Activated CD8-positive, alpha-beta T cell treated with anti-CD3 and anti-CD28 coated beads, Interleukin-2, amount 10 ng/mL, durations not matched to agents 7 days and 5 days (primary cell): ENCODE measurements at regions of chr5 and their contacts with region 1.

Region 1: GRCh38 chr5:160439205-160439600 is 17.5 kb downstream of the PTTG1 start:
- DNase-seq: peak; percentile 90
- ATAC-seq: peak; percentile 88
- H3K4me3 Mint-ChIP-seq: peak overlapping the region; percentile 74
- H3K27ac Mint-ChIP-seq: peak overlapping the region; percentile 85
- H3K4me1 Mint-ChIP-seq: peaks cover 41% of the 10 kb centered on the region
- H3K27me3 Mint-ChIP-seq: peaks cover 15% of the 10 kb centered on the region

Region 2: DNA sequence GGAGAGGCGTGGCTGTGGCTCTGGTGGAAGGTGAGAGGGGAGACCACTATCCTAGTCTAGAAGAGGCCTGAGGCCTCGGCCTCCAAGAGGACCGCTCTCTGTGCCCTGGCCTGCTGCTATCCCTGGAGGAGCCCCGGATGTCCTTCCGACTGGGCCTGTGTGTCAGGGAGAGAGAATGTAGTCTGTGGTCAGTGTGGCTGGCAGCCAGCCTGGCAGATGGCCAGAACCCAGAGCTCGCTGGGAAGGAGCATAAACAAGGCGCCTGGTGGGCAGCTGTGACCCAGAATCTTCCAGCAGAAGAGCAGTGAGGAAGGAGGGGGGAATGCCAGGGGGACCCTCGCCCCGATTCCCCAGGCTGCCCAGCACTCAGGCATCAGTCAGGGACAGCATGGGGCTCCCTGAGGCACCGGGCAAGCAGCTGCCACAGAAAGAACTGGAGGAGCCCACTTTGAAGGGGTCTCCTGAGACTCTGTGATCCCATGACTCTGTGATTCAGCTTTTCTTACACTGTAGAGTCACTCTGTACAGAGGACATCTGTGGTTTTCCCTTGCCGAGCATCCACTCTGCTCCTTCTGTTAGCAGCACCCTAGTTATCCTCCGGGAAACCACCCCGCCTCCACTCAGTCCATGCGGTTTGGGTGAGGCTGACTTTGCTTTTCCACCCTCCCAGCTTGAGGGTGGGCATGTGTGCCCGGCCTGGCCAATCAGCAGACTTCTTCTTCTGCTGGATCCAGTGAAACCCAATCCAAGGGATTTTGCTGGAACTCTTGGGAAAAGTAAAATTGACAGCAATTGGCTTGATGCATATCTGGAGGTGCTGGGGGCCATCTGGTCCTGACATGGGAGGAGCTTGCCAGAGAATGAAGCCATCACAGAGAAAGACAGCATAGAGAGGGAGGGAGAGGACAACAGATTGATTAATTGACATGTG is 273.8 kb before region 1 on chr5:
- CTCF ChIA-PET with region 1: no interaction called
- POLR2A ChIA-PET with region 1: no interaction called
- DNase-seq: no peak
- ATAC-seq: peak; percentile 42
- H3K4me3 Mint-ChIP-seq: no peak overlapping the region
- H3K27ac Mint-ChIP-seq: no peak overlapping the region
- H3K4me1 Mint-ChIP-seq: peaks cover 10% of the 10 kb centered on the region
- H3K27me3 Mint-ChIP-seq: peaks cover 13% of the 10 kb centered on the region

Region 3: DNA sequence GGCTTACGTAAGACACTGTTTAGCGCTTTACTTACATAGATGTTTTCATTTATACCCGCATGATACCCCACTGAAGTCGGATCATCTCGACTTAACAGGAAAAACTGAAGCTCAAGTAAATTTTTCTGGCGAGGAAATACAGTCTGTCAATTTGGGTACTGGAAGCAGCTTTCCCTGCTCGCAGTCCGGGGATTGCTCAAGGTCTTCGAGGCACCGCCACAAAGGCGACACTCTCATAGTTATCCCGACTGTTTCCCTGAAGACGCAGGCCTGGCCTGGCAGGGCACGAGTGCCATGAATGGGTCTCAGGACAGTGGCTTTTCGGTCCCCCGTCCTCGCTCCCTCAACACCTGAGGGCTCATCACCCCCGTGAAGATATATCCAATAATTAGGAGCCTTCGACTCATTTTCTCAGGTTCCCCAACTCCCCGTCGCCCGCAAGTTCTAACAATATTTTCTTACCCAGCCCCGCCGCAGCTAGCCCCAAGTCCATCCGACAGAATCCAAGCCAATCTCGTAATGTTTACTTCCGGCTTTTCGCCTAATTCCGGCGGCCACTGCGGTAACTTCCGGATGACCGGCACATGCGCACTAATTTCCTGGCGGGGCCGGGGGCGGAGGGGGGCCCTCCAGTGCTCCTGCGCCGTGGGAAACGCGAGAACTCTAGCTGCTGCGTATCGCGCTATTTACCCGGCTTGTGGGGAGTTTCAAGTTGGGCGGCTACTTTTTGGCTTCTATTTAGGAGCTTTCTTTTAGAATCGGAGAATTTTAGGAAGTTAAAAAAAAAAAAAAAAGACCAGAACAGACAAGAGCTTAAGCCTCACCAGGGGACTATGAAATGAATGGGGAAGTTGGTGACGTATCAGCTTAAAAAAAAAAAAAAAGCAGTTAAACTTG is 20.4 kb before region 1 on chr5 and contains the start of gene SLU7:
- CTCF ChIA-PET with region 1: interaction called, 202 read pairs
- POLR2A ChIA-PET with region 1: interaction called, 14 read pairs
- DNase-seq: peak; percentile 96
- ATAC-seq: peak; percentile 84
- H3K4me3 Mint-ChIP-seq: peak within 1 kb of the TSS; percentile 100
- H3K27ac Mint-ChIP-seq: peak within 1 kb of the TSS; percentile 99
- H3K4me1 Mint-ChIP-seq: peaks cover 63% of the 10 kb centered on the region
- H3K27me3 Mint-ChIP-seq: no peaks in the 10 kb centered on the region
- total RNA-seq, gene SLU7: 41.0 to 46.9 TPM

Region 4: DNA sequence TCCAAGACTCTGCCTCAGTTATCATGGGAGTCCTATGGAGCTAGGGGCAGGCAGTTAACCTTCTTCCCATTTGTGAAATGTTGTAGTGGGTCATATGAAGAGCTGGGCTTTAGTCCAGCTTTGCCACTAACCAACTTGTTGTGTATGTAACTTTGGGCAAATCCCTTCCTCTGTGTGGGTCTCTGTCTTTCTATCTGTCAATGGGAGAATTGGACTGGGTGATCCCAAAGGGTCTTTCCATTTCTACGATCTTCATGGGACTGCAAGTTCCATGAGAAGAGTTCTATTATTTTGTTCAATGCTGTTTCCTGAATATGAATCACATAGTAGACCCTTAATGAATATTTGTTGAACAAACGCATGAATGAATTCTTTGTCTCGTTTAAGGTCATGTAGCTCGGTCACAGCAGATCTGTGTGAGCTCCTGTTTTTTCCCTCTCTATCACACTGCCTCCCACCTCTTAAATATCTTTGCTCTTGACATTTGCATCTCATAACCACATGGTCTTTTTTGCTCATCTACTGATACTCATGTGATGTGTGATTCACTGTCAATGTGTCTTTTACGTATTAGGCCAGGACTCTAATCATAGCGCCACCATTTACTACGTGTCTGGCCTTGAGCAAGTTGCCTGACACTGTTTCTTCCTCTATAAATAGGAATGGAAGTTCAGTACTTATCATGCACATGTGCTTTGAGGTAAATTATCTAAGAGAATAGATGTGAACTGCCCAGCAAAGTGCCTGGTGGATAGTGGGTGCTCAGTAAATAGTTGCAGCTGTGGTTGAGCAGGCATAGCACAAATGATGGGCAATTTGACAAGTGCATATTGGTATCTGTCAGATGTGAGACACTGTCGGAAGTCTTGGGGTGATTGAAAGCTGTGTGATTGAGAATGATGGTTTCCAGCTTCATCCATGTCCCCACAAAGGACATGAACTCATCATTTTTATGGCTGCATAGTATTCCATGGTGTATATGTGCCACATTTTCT is 19.9 kb after region 1 on chr5:
- CTCF ChIA-PET with region 1: interaction called, 295 read pairs
- POLR2A ChIA-PET with region 1: no interaction called
- DNase-seq: no peak
- ATAC-seq: no peak
- H3K4me3 Mint-ChIP-seq: no peak overlapping the region
- H3K27ac Mint-ChIP-seq: no peak overlapping the region
- H3K4me1 Mint-ChIP-seq: peaks cover 18% of the 10 kb centered on the region
- H3K27me3 Mint-ChIP-seq: peaks cover 3% of the 10 kb centered on the region

Region 5: DNA sequence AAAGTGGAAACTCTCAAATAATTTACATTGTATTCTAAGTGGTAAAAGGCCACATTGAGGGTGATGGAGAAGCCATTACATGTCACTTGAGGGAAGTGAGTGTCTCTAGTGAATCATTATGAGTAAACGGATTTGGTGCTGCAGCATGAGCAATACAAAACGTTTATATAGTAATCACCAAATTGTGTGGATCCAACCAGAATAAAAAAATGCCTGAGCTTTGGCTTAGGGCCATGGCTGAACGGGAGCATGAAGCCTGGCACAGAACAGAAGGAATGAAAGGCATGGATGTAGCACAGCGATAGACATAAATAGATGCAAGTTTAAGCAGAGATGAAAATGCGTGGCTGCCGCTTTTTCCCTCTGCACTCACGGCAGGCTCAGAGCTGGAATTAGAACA is 40.7 kb after region 1 on chr5:
- CTCF ChIA-PET with region 1: interaction called, 54 read pairs
- POLR2A ChIA-PET with region 1: no interaction called
- DNase-seq: no peak
- ATAC-seq: no peak
- H3K4me3 Mint-ChIP-seq: no peak overlapping the region
- H3K27ac Mint-ChIP-seq: no peak overlapping the region
- H3K4me1 Mint-ChIP-seq: peaks cover 31% of the 10 kb centered on the region
- H3K27me3 Mint-ChIP-seq: no peaks in the 10 kb centered on the region

Region 6: DNA sequence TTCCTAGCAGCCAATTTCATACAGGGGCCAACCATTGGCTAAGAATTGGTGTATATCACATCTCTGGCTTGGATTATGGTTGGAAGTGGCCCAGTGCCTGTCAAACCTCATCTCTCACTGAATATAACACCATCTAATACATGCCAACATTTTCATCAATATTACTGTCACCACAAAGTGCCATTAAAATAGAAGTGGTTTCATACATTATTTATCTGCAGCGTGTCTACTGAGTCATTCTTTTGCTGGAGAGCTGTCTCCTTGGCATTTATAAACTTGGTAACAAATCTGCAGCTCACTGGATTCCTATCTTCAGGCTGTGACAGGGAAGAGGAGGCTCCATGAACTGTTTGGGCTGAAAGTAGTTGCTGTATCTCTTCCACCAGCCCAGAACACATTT is 53.4 kb after region 1 on chr5:
- CTCF ChIA-PET with region 1: interaction called, 17 read pairs
- POLR2A ChIA-PET with region 1: no interaction called
- DNase-seq: no peak
- ATAC-seq: no peak
- H3K4me3 Mint-ChIP-seq: no peak overlapping the region
- H3K27ac Mint-ChIP-seq: no peak overlapping the region
- H3K4me1 Mint-ChIP-seq: peaks cover under 1% of the 10 kb centered on the region
- H3K27me3 Mint-ChIP-seq: no peaks in the 10 kb centered on the region

Region 7: GRCh38 chr5:160508780-160509361 is 69.7 kb after region 1 on chr5:
- CTCF ChIA-PET with region 1: interaction called, 177 read pairs
- POLR2A ChIA-PET with region 1: interaction called, 11 read pairs
- DNase-seq: peak; percentile 79
- ATAC-seq: peak; percentile 68
- H3K4me3 Mint-ChIP-seq: no peak overlapping the region
- H3K27ac Mint-ChIP-seq: no peak overlapping the region
- H3K4me1 Mint-ChIP-seq: peaks cover 38% of the 10 kb centered on the region
- H3K27me3 Mint-ChIP-seq: peaks cover 7% of the 10 kb centered on the region